ENCODE measurements at regions of chr17 and their contacts with region 1.

Region 1: DNA sequence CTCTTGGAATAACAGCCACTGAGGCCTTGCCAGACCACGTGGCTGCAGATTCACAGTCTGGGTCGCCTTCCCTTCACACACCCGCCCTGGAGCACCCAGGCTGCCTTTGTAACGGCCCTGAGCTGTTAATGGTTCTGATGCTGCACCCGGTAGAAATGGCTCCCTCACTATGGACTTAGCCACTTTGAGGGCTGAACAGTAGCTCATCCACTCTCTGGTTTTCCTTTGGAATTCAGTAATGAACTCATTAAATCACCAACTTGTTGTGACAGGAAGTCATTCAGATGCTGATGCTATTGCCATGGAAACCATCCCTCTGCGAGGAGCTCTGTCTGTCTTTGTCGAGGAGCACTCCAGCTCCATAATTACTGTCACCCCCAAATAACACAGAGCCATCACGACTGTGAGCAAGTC is 59.2 kb downstream of the CDK5R1 start:
- DNase-seq: no peak
- ATAC-seq: no peak
- H3K4me3 ChIP-seq: no peak overlapping the region
- H3K4me3 Mint-ChIP-seq: no peak overlapping the region
- H3K27ac ChIP-seq: no peak overlapping the region
- H3K27ac Mint-ChIP-seq: no peak overlapping the region
- H3K4me1 ChIP-seq: no peaks in the 10 kb centered on the region
- H3K4me1 Mint-ChIP-seq: peaks cover 0 to 8% (median 3%) of the 10 kb centered on the region in 7 donors
- H3K27me3 ChIP-seq: no peaks in the 10 kb centered on the region
- H3K27me3 Mint-ChIP-seq: peaks cover 0 to 3% (median 0%) of the 10 kb centered on the region in 5 donors

Region 2: DNA sequence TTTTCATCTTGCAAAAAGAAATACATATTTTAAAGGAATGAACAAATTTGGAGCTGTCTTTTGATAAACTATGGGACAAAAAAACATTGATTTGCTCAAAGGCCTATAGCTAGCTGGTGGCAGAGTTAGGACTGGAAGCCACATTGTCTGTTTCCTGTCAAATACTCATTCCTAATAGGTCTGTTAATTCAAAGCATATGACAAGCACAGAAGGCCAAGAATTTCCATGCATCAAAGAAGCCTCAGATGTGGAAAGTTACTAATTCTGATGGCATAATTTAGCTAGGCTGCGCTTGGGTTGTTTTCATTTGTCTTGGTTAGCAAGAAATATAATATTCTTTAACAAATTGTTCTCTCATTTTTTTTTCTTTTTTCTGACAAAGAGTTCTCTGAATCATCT is 38.8 kb after region 1 on chr17:
- CTCF ChIA-PET with region 1: no interaction called
- POLR2A ChIA-PET with region 1: no interaction called
- intact Hi-C with region 1: loop called in 1 of 2 experiments (anchors 1 kb)
- DNase-seq: no peak
- ATAC-seq: no peak
- H3K4me3 ChIP-seq: no peak overlapping the region
- H3K4me3 Mint-ChIP-seq: no peak overlapping the region
- H3K27ac ChIP-seq: no peak overlapping the region
- H3K27ac Mint-ChIP-seq: no peak overlapping the region
- H3K4me1 ChIP-seq: no peaks in the 10 kb centered on the region
- H3K4me1 Mint-ChIP-seq: no peaks in the 10 kb centered on the region
- H3K27me3 ChIP-seq: no peaks in the 10 kb centered on the region
- H3K27me3 Mint-ChIP-seq: peaks cover 0 to 3% (median 0%) of the 10 kb centered on the region in 5 donors